ENCODE measurements at regions of chr9 and their contacts with region 1.

Region 1: GRCh38 chr9:110579034-110579861 is at the start of gene SVEP1:
- DNase-seq: peak; percentile 46
- H3K4me3 ChIP-seq: peak within 1 kb of the TSS; percentile 36 to 54 (median 38)
- H3K27ac ChIP-seq: no peak within 1 kb of the TSS
- H3K4me1 ChIP-seq: peaks cover 8% of the 10 kb centered on the region
- H3K27me3 ChIP-seq: peaks cover 19 to 28% of the 10 kb centered on the region in 2 experiments
- CTCF ChIP-seq: no peak
- POLR2A ChIP-seq: no peak
- total RNA-seq, gene SVEP1: 0.12 and 0.29 TPM in 2 replicates

Region 2: GRCh38 chr9:110452227-110452801 is 126.9 kb before region 1 on chr9:
- CTCF ChIA-PET with region 1: no interaction called
- POLR2A ChIA-PET with region 1: no interaction called
- dilution Hi-C with region 1: no loop called
- intact Hi-C with region 1: loop called (anchors 1 kb)
- DNase-seq: peak; percentile 20
- H3K4me3 ChIP-seq: no peak overlapping the region
- H3K27ac ChIP-seq: no peak overlapping the region
- H3K4me1 ChIP-seq: no peaks in the 10 kb centered on the region
- H3K27me3 ChIP-seq: no peaks in the 10 kb centered on the region
- CTCF ChIP-seq: peak in 1 of 2 donors; percentile 10
- POLR2A ChIP-seq: no peak

Region 3: DNA sequence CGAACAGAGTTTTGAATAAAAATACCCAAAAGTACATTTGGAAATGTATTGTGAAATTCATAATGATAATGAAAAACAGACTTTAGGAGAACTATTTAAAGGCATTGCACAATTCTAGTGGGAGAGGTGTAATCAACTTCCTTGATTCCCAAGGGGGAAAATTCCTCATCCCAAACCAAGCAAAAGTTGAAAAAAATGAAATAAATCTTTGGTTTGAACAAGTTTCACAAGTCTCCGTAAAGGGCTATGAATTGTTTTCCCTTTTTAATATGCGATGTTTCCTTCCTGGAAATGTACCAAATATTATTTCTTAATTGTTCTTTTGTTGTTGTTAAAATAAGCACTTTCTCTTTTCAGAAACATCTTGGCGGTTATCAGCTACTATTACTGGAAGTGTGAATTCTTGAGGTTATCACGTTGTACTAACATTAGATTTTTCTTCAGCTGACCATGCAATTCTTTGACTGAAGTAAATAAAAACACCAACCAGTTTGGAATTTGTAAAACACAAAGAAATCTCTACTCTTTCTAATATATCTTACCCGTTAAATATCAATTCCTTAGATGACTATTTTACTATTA is 59.0 kb before region 1 on chr9:
- CTCF ChIA-PET with region 1: no interaction called
- POLR2A ChIA-PET with region 1: no interaction called
- dilution Hi-C with region 1: no loop called
- intact Hi-C with region 1: loop called (anchors 5 kb)
- DNase-seq: peak; percentile 54
- H3K4me3 ChIP-seq: no peak overlapping the region
- H3K27ac ChIP-seq: no peak overlapping the region
- H3K4me1 ChIP-seq: no peaks in the 10 kb centered on the region
- H3K27me3 ChIP-seq: no peaks in the 10 kb centered on the region
- CTCF ChIP-seq: no peak
- POLR2A ChIP-seq: no peak

Region 4: GRCh38 chr9:110555551-110556331 is 23.5 kb before region 1 on chr9:
- CTCF ChIA-PET with region 1: interaction called, 3 read pairs
- POLR2A ChIA-PET with region 1: no interaction called
- dilution Hi-C with region 1: no loop called
- intact Hi-C with region 1: loop called (anchors 2 kb)
- DNase-seq: peak; percentile 96
- H3K4me3 ChIP-seq: peak overlapping the region in 1 of 3 experiments; percentile 23
- H3K27ac ChIP-seq: peak overlapping the region; percentile 51
- H3K4me1 ChIP-seq: peaks cover 16% of the 10 kb centered on the region
- H3K27me3 ChIP-seq: no peaks in the 10 kb centered on the region
- CTCF ChIP-seq: no peak
- POLR2A ChIP-seq: peak; percentile 56